B cell (primary cell): ENCODE measurements at regions of chr1 and their contacts with region 1.

Region 1: GRCh38 chr1:75724472-75725022 is at the start of gene ACADM:
- DNase-seq: peak; percentile 90
- ATAC-seq: peak; percentile 90
- H3K4me3 ChIP-seq: peak within 1 kb of the TSS; percentile 64 to 96 (median 93)
- H3K4me3 Mint-ChIP-seq: peak within 1 kb of the TSS; percentile 100
- H3K27ac ChIP-seq: peak within 1 kb of the TSS; percentile 88 to 90
- H3K27ac Mint-ChIP-seq: peak within 1 kb of the TSS; percentile 99
- H3K4me1 ChIP-seq: peaks cover 30 to 32% of the 10 kb centered on the region in 2 donors
- H3K4me1 Mint-ChIP-seq: peaks cover 46% of the 10 kb centered on the region
- H3K27me3 ChIP-seq: no peaks in the 10 kb centered on the region
- H3K27me3 Mint-ChIP-seq: no peaks in the 10 kb centered on the region
- CTCF ChIP-seq: no peak
- total RNA-seq, gene ACADM: 53.3 and 57.4 TPM in 2 replicates

Region 2: DNA sequence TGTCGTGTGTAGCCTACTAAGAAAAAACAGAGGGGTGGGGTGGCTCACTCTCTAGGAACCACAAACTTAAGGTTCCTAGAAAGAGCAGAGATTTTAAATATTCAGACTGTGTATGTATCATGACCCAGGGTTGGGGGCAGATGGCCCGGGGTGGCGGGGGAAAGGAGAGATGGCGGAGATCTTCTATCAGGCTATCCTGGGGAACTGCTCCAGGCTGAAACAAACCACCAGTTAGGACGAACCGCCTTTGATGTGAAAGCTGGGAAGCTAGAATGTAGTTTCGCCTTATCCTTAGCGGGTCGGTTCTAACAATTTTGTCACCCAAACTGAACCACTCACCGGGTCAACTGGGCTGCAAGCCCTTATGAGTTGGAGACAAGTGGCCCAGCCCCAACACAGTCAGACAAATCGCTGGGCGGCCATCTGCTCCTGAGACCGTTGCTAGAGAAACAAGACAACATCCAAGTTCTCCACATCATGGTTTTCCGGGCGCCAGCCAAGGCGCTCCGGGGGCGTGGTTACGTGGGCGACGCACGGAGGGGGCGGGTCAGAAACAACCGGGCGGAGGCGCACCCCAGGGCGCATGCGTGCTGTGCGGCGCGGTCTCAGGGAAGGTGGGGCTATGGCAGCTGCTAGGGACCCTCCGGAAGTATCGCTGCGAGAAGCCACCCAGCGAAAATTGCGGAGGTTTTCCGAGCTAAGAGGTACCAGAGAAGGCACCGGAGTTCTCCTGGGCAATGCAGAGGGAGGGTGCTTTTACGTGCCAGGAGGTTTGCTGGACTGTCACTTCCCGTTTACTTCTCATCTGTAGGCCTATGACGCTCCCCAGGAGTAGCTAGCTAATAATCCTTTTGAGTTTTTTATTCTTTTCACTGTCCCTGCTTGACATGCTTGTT is 1526.6 kb before region 1 on chr1 and contains the starts of genes FPGT and LRRIQ3:
- CTCF ChIA-PET with region 1: no interaction called
- POLR2A ChIA-PET with region 1: no interaction called
- intact Hi-C with region 1: loop called (anchors 10 kb)
- DNase-seq: peak; percentile 96
- ATAC-seq: peak; percentile 97
- H3K4me3 ChIP-seq: peak within 1 kb of the TSS; percentile 58 to 95 (median 77)
- H3K4me3 Mint-ChIP-seq: peak within 1 kb of the TSS; percentile 93
- H3K27ac ChIP-seq: peak within 1 kb of the TSS; percentile 77 to 85
- H3K27ac Mint-ChIP-seq: peak within 1 kb of the TSS; percentile 96
- H3K4me1 ChIP-seq: peaks cover 8 to 16% of the 10 kb centered on the region in 2 donors
- H3K4me1 Mint-ChIP-seq: peaks cover 24% of the 10 kb centered on the region
- H3K27me3 ChIP-seq: no peaks in the 10 kb centered on the region
- H3K27me3 Mint-ChIP-seq: no peaks in the 10 kb centered on the region
- CTCF ChIP-seq: no peak
- total RNA-seq, gene FPGT: 10.7 and 14.8 TPM in 2 replicates
- total RNA-seq, gene LRRIQ3: 1.4 and 2.2 TPM in 2 replicates

Region 3: GRCh38 chr1:75233302-75233929 is 491.1 kb before region 1 on chr1:
- CTCF ChIA-PET with region 1: no interaction called
- POLR2A ChIA-PET with region 1: interaction called, 9 read pairs
- intact Hi-C with region 1: loop called (anchors 10 kb)
- DNase-seq: peak; percentile 57
- ATAC-seq: peak; percentile 69
- H3K4me3 ChIP-seq: no peak overlapping the region
- H3K4me3 Mint-ChIP-seq: no peak overlapping the region
- H3K27ac ChIP-seq: no peak overlapping the region
- H3K27ac Mint-ChIP-seq: no peak overlapping the region
- H3K4me1 ChIP-seq: no peaks in the 10 kb centered on the region
- H3K4me1 Mint-ChIP-seq: no peaks in the 10 kb centered on the region
- H3K27me3 ChIP-seq: no peaks in the 10 kb centered on the region
- H3K27me3 Mint-ChIP-seq: peaks cover 3% of the 10 kb centered on the region
- CTCF ChIP-seq: peak; percentile 85

Region 4: DNA sequence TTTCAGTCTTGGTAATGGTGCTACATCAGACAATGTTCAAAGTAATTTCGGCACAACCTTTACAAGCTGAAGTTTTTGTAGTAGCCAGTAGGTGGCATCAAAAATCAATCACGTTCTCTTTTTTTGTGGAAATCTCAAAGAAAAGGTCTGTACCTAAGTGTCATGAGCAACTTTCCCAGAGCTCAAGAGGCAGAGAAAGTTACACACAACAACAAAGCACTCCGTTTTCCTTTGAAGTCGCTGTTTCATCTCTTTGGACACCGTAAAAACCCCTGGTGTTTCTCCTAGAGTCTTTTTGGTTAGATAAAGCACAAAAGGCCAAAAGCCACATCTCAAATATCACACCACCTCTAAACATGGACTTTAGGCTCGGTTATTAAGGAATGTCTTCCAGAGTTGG is 458.8 kb before region 1 on chr1:
- CTCF ChIA-PET with region 1: no interaction called
- POLR2A ChIA-PET with region 1: no interaction called
- intact Hi-C with region 1: loop called (anchors 2 kb)
- DNase-seq: peak; percentile 51
- ATAC-seq: peak; percentile 69
- H3K4me3 ChIP-seq: no peak overlapping the region
- H3K4me3 Mint-ChIP-seq: no peak overlapping the region
- H3K27ac ChIP-seq: no peak overlapping the region
- H3K27ac Mint-ChIP-seq: no peak overlapping the region
- H3K4me1 ChIP-seq: peaks cover 11 to 14% of the 10 kb centered on the region in 2 donors
- H3K4me1 Mint-ChIP-seq: peaks cover 24% of the 10 kb centered on the region
- H3K27me3 ChIP-seq: no peaks in the 10 kb centered on the region
- H3K27me3 Mint-ChIP-seq: no peaks in the 10 kb centered on the region
- CTCF ChIP-seq: peak; percentile 75

Region 5: GRCh38 chr1:76074321-76075187 is 350.0 kb after region 1 on chr1 and contains the start of gene ST6GALNAC3:
- CTCF ChIA-PET with region 1: no interaction called
- POLR2A ChIA-PET with region 1: no interaction called
- intact Hi-C with region 1: loop called (anchors 5 kb)
- DNase-seq: peak; percentile 87
- ATAC-seq: peak; percentile 80
- H3K4me3 ChIP-seq: peak within 1 kb of the TSS; percentile 80 to 86 (median 84)
- H3K4me3 Mint-ChIP-seq: peak within 1 kb of the TSS; percentile 90
- H3K27ac ChIP-seq: peak within 1 kb of the TSS; percentile 66 to 75
- H3K27ac Mint-ChIP-seq: peak within 1 kb of the TSS; percentile 87
- H3K4me1 ChIP-seq: peaks cover 20 to 21% of the 10 kb centered on the region in 2 donors
- H3K4me1 Mint-ChIP-seq: peaks cover 34% of the 10 kb centered on the region
- H3K27me3 ChIP-seq: no peaks in the 10 kb centered on the region
- H3K27me3 Mint-ChIP-seq: peaks cover 10% of the 10 kb centered on the region
- CTCF ChIP-seq: no peak
- total RNA-seq, gene ST6GALNAC3: 13.4 and 17.3 TPM in 2 replicates

Region 6: DNA sequence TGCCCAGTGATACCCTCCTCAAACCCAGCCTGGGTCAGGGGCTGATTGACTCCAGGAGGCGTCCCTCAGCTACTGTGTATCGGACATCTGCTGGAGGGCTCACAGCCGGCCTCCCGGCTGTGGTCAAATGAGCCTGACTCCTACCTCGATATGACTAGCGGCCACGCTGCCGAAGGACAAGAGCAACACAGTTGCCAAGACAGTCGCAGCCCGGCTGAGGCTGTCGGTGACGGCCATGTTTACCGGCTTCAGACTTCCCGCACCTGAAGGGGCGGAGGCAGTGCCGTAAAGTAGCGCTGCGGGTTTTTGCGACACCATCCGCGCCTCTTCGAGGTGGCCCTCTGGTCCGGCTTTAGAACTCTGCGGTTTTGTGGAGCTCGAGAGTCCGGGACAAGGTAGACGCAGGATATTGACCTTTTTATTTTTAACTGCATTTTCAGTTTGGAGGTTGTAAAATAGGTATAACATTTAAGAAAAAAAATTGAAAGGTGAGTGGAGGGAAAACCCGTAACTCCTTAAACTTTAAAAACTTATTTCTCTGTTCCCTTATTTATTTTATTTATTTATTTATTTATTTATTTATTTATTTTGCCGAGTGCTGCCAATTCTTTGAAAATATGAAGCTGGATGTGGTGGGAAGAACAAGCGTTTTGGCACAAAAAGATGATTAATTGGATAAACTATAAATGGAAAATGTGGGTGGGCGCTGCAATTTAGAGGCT is 1494.8 kb after region 1 on chr1 and contains the start of gene PIGK:
- CTCF ChIA-PET with region 1: no interaction called
- POLR2A ChIA-PET with region 1: no interaction called
- intact Hi-C with region 1: loop called (anchors 2 kb)
- DNase-seq: peak; percentile 89
- ATAC-seq: peak; percentile 96
- H3K4me3 ChIP-seq: peak within 1 kb of the TSS; percentile 85 to 94 (median 93)
- H3K4me3 Mint-ChIP-seq: peak within 1 kb of the TSS; percentile 96
- H3K27ac ChIP-seq: peak within 1 kb of the TSS; percentile 71 to 83
- H3K27ac Mint-ChIP-seq: peak within 1 kb of the TSS; percentile 91
- H3K4me1 ChIP-seq: peaks cover 9 to 11% of the 10 kb centered on the region in 2 donors
- H3K4me1 Mint-ChIP-seq: peaks cover 26% of the 10 kb centered on the region
- H3K27me3 ChIP-seq: no peaks in the 10 kb centered on the region
- H3K27me3 Mint-ChIP-seq: no peaks in the 10 kb centered on the region
- CTCF ChIP-seq: no peak
- total RNA-seq, gene PIGK: 14.9 and 16.4 TPM in 2 replicates

Region 7: DNA sequence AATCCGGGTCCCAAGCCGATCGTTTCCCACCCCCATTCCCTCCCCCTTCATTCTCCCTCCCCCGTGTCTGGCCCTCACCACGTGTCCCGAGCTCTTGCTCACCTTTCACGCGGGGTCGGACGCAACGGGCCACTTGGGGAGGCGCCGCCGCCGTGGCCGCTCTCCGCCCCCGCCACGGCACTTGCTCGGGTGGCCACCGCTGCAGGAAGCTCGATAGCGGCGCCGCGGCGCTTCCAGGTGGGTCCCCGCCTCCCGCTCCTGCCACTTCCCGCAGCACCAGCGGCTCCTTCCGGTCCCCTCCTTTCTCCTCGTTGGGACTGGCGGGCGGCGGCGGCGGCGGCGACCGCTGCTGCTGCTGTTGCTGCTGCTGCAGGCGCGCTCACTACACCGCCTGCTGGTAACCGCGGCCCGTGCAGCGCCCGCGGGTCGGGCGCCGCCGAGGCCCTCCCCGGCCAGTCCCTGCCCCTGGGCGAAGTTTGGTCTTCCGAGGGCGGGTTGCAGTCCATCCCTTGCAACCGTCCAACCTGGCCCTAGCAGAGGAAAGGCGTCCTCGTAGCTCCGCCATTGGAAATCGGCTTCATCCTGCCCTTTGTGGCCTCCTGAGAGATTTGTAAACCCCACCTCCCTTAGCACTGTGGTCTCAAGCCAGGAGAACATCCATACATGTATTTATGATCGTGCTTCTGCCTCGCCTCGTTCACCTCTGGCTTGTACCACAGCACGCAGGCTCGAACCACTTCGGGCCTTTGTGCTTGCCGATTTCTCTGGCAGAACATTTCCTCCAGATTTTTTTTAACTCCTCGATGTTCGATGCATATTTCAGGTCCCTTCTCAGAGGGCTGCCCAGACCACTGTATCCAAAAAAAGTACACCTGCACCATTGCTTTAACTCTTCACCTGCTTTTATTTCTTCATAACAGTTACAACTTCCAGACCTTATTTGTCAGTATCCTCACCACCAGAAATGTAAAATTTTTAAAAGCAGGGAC is 1958.9 kb after region 1 on chr1:
- CTCF ChIA-PET with region 1: no interaction called
- POLR2A ChIA-PET with region 1: no interaction called
- intact Hi-C with region 1: loop called (anchors 5 kb)
- DNase-seq: peak; percentile 95
- ATAC-seq: peak; percentile 76
- H3K4me3 ChIP-seq: peak overlapping the region; percentile 13 to 89 (median 67)
- H3K4me3 Mint-ChIP-seq: peak overlapping the region; percentile 90
- H3K27ac ChIP-seq: peak overlapping the region; percentile 89 to 98
- H3K27ac Mint-ChIP-seq: peak overlapping the region; percentile 95
- H3K4me1 ChIP-seq: peaks cover 16 to 27% of the 10 kb centered on the region in 2 donors
- H3K4me1 Mint-ChIP-seq: peaks cover 37% of the 10 kb centered on the region
- H3K27me3 ChIP-seq: no peaks in the 10 kb centered on the region
- H3K27me3 Mint-ChIP-seq: no peaks in the 10 kb centered on the region
- CTCF ChIP-seq: peak; percentile 95